Sigmoid colon (tissue), 7 donors: ENCODE measurements at regions of chr11 and their contacts with region 1.

Region 1: GRCh38 chr11:1487851-1488547 is 1.4 kb upstream of the MOB2 start:
- DNase-seq: peak; percentile 79
- H3K4me3 ChIP-seq: peak overlapping the region in 2 of 4 donors; percentile 3 to 4
- H3K27ac ChIP-seq: peak overlapping the region; percentile 92 to 96 (median 94)
- H3K4me1 ChIP-seq: peaks cover 0 to 75% (median 59%) of the 10 kb centered on the region in 4 donors
- H3K27me3 ChIP-seq: no peaks in the 10 kb centered on the region
- CTCF ChIP-seq: peak in 3 of 4 experiments; percentile 19 to 59 (median 30)
- EP300 ChIP-seq: no peak
- POLR2A ChIP-seq: no peak

Region 2: DNA sequence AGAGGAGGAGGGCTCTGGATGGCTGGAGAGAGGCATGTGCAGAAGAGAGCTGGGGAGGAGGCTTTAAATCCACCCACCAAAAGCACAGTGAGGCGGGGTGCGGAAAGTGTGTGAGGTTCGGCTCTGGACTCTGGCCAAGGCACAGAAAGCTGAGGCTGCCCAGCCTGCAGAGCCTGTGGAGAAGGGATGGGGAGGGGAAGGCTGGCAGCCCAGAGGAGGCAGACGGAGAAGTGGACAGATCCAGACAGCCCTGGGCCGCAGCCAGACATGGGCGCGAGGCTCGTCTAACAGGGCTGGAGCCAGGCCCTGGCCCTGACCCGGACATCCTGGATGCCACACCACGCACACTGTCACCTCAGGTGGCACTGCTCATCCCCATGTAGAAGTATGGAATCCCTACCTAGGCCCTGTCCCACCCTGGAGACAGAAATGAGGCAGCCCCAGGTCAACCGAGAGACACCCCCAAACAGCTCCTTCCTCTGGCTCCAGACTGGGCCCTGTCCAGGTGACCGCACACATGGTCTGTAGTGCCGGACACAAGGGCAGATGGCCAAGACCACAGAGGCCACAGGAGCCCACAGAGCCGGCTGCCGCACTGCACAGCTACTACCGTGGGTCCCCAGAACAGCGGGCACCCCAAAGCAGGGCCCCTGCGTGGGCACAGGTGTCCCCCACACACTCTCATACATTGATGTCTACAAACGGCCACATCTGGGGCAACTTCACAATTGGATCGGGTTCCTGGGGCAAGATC is 15.1 kb after region 1 on chr11:
- intact Hi-C with region 1: loop called (anchors 2 kb)
- DNase-seq: peak; percentile 91
- H3K4me3 ChIP-seq: no peak overlapping the region
- H3K27ac ChIP-seq: peak overlapping the region; percentile 37 to 75 (median 68)
- H3K4me1 ChIP-seq: peaks cover 0 to 75% (median 62%) of the 10 kb centered on the region in 4 donors
- H3K27me3 ChIP-seq: no peaks in the 10 kb centered on the region
- CTCF ChIP-seq: no peak
- EP300 ChIP-seq: no peak
- POLR2A ChIP-seq: no peak